Cardiac septum (tissue), 1 donor: ENCODE measurements at regions of chr6 and their contacts with region 1.

Region 1: DNA sequence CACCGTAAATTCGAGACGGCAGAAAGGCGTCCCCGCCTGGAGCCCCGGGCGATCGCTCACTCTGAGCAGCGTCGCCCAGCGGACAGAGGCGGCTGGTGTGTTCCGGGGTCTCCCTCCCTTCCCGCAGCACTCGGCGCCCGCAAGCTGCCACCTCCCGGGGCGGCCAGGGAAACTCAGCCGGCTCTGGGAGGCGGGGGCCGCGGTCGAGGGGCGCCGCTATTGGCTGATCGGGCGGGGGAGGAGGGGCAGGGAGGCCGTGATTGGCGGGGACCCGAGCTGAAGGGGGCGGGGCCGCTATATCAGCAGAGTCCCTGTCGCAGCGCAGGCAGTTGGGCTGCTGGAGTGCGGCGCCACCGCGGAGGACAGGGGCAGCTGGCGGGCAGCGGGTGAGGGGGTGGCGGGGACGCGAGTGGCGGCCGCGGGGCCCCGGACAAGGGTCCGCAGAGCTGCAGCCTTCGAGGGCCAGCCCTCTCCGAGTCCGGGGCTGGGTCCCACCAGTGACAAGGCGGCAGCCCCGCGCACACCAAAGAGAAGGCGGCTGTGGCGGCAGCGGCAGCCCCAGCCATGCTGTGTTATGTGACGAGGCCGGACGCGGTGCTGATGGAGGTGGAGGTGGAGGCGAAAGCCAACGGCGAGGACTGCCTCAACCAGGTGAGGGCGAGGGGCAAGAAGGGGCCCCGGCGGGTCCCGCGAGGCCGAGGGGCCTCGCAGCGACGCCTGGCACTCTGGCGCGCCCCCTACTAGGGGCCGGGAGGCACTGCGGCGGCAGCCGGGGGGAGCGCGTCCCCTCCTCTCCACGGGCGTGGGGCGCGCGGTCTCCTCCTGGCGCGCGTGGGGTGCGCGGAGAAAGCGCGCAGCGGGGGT is at the start of gene MYLIP:
- DNase-seq: peak; percentile 100
- total RNA-seq, gene MYLIP: 17.6 TPM

Region 2: GRCh38 chr6:15691250-15691869 is 437.6 kb before region 1 on chr6:
- intact Hi-C with region 1: loop called (anchors 2 kb)
- DNase-seq: peak; percentile 92

Region 3: DNA sequence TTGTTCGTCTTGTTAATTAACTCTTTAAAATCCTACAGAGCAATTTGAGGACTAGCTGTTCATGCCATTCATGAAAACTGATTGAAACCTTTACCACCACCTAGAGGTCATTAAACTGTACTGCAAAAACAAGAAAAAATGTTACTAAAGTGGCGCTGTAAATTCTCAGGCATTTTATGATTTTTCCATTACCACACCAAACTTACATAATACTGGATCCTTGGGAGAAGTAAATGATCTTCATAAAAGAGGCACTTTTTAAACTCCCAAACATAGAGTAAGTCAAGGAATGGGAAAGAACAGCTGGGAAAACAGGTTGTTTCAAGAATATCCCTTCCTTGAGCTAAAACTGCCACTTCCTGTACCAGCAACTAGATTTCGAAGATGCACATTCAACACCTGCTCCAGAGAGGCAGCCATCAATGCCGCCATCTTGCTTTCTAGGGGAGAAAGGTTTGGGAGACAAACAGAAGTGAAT is 54.2 kb after region 1 on chr6:
- intact Hi-C with region 1: loop called (anchors 5 kb)
- DNase-seq: no peak

Region 4: GRCh38 chr6:16206595-16207037 is 77.6 kb after region 1 on chr6:
- intact Hi-C with region 1: loop called (anchors 5 kb)
- DNase-seq: no peak